Activated naive CD4-positive, alpha-beta T cell treated with anti-CD3 and anti-CD28 coated beads for 36 hours (primary cell): ENCODE measurements at regions of chr15 and their contacts with region 1.

Region 1: DNA sequence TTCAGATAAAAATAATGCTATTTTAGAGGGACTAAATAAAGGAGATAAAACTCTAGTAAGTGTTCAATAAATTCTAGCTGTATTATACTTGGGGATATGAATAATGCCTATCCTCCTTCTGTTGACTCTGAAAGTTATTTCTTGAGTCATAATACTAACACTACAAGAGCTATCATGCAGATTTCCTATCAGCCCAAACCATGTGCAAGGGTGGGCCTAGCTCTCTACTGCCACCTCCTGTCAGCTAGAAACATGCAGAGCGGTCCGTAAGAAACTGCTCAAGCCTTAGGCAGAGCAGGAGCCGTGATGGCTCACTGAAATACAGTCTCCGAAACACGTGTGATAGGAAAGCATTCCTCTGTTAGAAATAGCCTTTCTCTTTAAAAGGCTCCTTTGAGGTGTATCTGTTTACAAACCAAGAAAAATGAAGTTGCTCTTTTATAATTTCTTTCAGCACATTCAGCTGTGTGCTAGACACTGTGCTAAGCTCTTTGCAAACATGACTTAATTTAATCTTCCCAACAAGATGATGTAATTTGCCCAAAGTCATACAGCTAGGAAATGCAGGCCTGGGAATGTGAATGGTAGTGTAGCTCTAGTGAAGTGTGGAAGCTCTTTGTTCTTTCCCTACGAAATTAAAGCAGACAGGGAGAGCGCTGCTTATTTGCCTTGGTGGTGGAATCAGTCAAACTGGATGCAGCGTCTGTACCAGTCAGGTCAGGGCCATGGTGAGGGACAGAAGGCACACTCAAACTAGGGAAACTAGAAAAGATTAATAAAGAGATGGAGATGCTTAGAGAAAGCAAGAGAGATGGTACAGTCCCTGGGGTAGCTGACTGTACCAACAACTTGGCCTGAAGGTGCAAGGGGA is 43.1 kb downstream of the MTHFS start:
- DNase-seq: peak; percentile 83
- H3K4me3 Mint-ChIP-seq: no peak overlapping the region
- H3K27ac Mint-ChIP-seq: no peak overlapping the region
- H3K4me1 Mint-ChIP-seq: peaks cover 17% of the 10 kb centered on the region
- H3K27me3 Mint-ChIP-seq: no peaks in the 10 kb centered on the region

Region 2: DNA sequence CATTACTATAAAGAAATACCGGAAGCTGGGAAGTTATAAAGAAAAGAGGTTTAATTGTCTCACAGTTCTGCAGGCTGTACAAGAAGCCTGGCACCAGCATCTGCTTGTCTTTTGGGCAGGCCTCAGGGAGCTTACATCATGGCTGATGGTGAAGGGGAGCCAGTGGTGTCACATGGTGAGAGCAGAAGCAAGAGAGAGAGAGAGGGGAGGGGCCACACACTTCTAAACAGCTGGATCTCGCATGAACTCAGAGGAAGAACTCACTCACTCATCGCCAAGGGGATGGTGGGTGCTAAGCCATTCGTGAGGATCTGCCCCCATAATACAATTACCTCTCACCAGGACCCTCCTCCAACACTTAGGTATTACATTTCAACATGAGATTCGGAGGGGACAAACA is 622.9 kb before region 1 on chr15:
- CTCF ChIA-PET with region 1: no interaction called
- intact Hi-C with region 1: no loop called
- DNase-seq: no peak
- H3K4me3 Mint-ChIP-seq: no peak overlapping the region
- H3K27ac Mint-ChIP-seq: no peak overlapping the region
- H3K4me1 Mint-ChIP-seq: no peaks in the 10 kb centered on the region
- H3K27me3 Mint-ChIP-seq: peaks cover 11% of the 10 kb centered on the region

Region 3: DNA sequence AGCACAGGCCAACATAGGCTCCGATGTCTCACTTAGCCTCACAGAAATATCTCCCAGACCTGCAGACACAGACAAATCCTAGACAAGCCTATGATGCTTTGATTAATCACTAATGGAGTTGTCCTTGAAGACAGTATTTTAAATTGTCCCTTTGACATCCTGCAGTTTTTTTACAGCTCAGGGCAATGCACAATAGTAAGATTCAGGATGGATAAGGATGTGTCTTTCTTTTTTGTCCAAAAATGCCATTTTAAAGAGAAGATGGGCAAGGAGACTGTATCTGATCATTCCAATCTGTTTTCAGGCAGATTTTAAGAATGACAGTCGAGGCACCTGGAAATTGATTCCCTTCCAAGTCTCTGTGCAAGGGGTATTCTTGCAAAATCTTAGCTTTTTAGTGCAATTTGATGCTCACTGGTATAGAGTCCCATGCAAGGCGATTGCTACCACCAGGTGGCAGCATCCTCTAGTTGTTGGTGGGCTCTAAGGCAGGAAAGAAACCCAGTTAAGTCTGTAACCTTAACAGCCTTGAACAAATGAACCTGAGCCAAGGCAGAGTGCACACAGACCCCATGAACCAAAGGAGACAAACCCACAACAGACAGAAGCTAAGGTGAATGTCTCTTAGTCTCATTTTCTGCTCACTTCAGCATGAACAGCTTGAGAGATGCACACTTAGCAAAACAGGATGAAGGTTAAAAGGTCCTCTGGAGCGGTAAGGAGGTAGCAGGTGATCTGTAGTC is 472.8 kb before region 1 on chr15:
- CTCF ChIA-PET with region 1: interaction called, 23 read pairs
- intact Hi-C with region 1: loop called (anchors 1 kb)
- DNase-seq: peak; percentile 86
- H3K4me3 Mint-ChIP-seq: no peak overlapping the region
- H3K27ac Mint-ChIP-seq: no peak overlapping the region
- H3K4me1 Mint-ChIP-seq: no peaks in the 10 kb centered on the region
- H3K27me3 Mint-ChIP-seq: no peaks in the 10 kb centered on the region

Region 4: DNA sequence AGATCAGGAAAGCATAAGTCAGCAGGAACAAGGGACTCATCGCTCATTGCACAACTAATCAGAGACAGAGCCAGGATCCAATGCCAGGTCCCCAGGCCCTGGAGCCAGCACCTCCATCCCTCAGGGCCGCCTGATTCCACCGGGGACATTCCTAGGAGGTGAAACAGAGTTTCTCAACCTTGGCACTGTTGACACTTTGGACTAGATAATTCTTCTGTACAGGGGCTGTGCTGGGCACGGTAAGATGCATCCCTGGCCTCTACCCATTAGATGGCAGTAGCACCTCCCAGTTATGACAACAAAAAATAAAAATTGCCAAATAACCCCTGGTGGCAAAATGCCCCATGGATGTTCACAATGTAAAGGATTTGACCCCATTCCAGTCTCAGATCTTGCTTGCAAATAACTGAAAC is 84.6 kb before region 1 on chr15:
- CTCF ChIA-PET with region 1: no interaction called
- intact Hi-C with region 1: loop called (anchors 1 kb)
- DNase-seq: peak; percentile 22
- H3K4me3 Mint-ChIP-seq: no peak overlapping the region
- H3K27ac Mint-ChIP-seq: no peak overlapping the region
- H3K4me1 Mint-ChIP-seq: no peaks in the 10 kb centered on the region
- H3K27me3 Mint-ChIP-seq: peaks cover 10% of the 10 kb centered on the region

Region 5: DNA sequence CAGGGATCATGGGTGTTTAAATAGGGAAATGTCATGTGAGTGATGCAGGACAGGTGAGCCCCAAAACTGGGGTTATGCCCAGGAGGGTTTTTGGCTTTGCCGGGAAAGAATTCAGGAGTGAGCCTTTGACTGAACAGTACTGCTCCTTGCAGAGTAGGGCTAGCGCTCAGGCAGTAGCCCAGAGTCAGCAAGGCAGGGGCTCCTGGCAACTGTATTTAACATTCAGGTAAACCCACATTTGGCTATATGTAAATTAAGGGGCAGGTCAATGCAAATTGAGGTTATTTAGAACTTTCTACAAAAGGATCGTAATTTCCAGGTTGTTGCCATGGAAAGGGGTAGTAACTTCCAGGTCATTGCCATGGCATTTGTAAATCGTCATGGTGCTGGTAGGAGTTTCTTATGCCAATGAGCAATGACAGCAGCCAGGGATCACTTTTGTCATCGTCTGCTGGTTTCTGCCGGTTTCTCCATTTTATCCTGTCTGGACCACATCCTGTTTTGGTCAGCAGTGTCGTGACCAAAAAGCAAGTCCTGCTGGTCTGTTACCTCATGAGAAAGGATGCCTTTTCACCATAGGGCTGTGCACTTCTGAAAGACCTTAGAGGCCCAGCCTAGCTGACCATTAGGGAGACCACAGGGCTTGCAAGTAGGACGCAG is 18.8 kb after region 1 on chr15:
- CTCF ChIA-PET with region 1: interaction called, 11 read pairs
- intact Hi-C with region 1: no loop called
- DNase-seq: peak; percentile 43
- H3K4me3 Mint-ChIP-seq: no peak overlapping the region
- H3K27ac Mint-ChIP-seq: no peak overlapping the region
- H3K4me1 Mint-ChIP-seq: peaks cover 24% of the 10 kb centered on the region
- H3K27me3 Mint-ChIP-seq: no peaks in the 10 kb centered on the region

Region 6: GRCh38 chr15:79903626-79904025 is 49.9 kb after region 1 on chr15:
- CTCF ChIA-PET with region 1: no interaction called
- intact Hi-C with region 1: no loop called
- DNase-seq: no peak
- H3K4me3 Mint-ChIP-seq: no peak overlapping the region
- H3K27ac Mint-ChIP-seq: no peak overlapping the region
- H3K4me1 Mint-ChIP-seq: peaks cover 32% of the 10 kb centered on the region
- H3K27me3 Mint-ChIP-seq: no peaks in the 10 kb centered on the region

Region 7: GRCh38 chr15:79957741-79958140 is 104.0 kb after region 1 on chr15:
- CTCF ChIA-PET with region 1: interaction called, 4 read pairs
- intact Hi-C with region 1: loop called (anchors 1 kb)
- DNase-seq: no peak
- H3K4me3 Mint-ChIP-seq: no peak overlapping the region
- H3K27ac Mint-ChIP-seq: no peak overlapping the region
- H3K4me1 Mint-ChIP-seq: peaks cover 47% of the 10 kb centered on the region
- H3K27me3 Mint-ChIP-seq: no peaks in the 10 kb centered on the region